MCF 10A (cell line): ENCODE measurements at regions of chr3 and their contacts with region 1.

Region 1: DNA sequence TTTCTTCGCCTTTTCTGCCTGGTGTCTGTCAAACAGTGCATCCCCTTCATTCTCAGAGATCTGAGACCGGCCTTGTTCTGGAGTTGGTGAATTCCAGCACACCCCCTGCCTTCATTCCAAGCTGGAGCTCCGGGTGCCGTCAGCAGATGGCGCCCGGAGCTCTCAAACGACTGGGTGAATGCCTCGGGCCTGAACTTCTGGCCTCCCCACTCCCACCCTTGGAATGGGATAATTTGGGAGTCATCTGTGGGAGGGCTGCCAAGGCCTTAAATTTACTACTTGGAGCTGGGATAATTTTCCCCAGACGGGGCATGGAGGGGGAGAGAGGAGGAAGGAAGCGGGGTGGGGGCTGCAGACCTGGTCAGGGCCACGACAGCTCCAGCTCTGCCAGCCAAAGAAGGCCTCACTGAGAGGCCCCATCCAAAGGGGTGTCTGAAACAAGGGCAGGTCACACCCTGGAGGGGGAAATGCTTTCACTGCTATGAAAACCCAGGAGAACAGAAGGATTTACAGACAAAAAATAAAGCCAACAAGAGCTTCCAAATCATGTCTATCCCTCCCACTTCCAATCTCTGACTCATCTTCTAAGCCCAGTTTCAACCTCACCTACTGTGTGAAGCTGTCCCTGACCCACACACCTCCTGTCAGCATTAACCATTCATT is 187.9 kb downstream of the OPA1 start:
- DNase-seq: peak; percentile 93
- H3K4me3 Mint-ChIP-seq: no peak overlapping the region
- H3K27ac Mint-ChIP-seq: peak overlapping the region; percentile 88
- H3K4me1 Mint-ChIP-seq: peaks cover 35% of the 10 kb centered on the region
- H3K27me3 Mint-ChIP-seq: peaks cover 10% of the 10 kb centered on the region
- CTCF ChIP-seq: peak; percentile 93

Region 2: DNA sequence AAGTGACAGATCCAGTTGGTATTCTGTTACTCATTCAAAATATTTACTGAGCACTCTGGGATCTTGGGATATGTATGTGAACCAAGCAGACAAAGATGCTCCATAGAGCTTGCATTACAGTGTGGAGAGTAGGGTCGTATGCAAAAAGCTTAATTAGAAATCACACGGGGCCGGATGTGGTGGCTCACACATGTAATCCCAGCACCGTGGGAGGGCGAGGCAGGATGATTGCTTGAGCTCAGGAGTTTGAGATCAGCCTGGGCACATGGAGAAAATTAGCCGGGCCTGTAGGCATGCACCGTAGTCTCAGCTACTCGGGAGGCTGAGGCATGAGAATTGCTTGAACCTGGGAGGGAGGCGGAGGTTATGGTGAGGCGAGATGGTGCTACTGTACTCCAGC is 794.6 kb before region 1 on chr3:
- CTCF ChIA-PET with region 1: no interaction called
- POLR2A ChIA-PET with region 1: no interaction called
- intact Hi-C with region 1: no loop called
- DNase-seq: no peak
- H3K4me3 Mint-ChIP-seq: no peak overlapping the region
- H3K27ac Mint-ChIP-seq: no peak overlapping the region
- H3K4me1 Mint-ChIP-seq: no peaks in the 10 kb centered on the region
- H3K27me3 Mint-ChIP-seq: no peaks in the 10 kb centered on the region
- CTCF ChIP-seq: no peak

Region 3: DNA sequence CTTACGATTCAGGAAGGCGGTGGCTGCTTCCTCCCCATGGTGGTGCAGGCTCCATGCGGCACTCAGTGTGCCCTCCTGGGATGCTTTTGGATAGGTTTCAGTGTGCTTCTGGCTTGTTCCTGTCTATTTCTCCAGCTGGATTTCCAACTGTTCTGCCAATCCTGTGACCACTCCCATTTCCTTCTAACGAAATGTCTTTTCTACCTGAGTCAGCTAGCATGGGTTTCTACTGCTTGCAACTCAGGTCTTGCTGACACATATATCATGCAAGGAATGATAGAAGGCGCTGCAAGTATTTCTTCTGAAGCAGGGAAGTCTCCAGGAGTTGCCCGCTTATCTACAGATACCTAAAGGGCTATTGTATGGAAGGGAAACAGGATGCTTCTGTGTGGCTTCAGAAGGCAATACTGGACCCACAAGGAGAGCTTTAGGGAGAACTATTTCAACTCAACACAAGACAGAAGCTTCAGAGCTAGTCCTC is 56.4 kb after region 1 on chr3:
- CTCF ChIA-PET with region 1: interaction called, 8 read pairs
- POLR2A ChIA-PET with region 1: interaction called, 31 read pairs
- intact Hi-C with region 1: no loop called
- DNase-seq: peak; percentile 92
- H3K4me3 Mint-ChIP-seq: peak overlapping the region; percentile 61
- H3K27ac Mint-ChIP-seq: no peak overlapping the region
- H3K4me1 Mint-ChIP-seq: peaks cover 34% of the 10 kb centered on the region
- H3K27me3 Mint-ChIP-seq: no peaks in the 10 kb centered on the region
- CTCF ChIP-seq: no peak

Region 4: DNA sequence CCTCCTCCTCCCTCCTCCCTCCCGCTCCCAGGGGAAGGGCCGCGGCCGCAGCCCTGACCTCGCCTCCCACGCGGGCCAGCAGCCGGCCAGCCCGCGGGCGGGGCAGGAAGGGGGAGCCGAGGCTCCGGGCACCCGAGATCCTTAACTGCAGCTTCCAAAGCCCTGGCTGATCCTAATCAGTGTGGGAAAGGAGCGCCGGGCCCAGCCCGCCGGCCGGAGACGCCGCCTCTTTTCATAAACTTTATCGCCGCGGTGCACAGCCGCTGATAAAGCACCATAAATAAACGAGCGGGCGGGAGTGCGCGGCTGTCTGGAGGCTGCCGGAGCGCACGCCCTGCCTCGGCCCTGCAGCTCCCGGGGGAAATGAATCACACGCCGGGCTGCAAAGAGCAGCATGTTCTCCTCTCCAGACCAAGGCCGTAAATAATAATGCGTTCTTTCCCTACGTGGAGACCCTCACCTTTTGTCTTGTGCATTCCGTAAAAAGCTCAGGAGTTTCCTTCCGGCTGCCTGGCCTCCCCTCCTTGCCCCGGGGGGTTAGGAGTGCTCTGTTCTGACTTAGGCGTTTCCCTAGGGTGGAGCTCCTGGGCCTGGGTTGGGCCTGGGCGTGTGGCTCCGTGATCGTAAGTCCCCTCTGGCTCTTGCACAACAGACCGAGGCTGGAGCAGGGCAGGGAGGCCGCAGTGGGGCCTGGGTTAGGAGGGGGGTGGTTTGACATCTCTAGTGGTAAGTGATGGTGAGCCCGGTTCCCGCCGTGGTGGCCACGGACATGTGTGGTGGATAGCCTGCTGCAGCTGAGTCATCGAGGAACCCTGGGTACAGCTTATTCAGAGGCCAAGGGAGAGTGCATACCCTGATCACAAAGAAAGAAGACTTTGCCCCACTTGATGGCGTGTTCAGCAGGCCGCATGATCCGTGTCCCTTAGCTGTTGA is 222.4 kb after region 1 on chr3:
- CTCF ChIA-PET with region 1: interaction called, 10 read pairs
- POLR2A ChIA-PET with region 1: interaction called, 19 read pairs
- intact Hi-C with region 1: loop called (anchors 1 kb)
- DNase-seq: peak; percentile 96
- H3K4me3 Mint-ChIP-seq: peak overlapping the region; percentile 67
- H3K27ac Mint-ChIP-seq: peak overlapping the region; percentile 69
- H3K4me1 Mint-ChIP-seq: peaks cover 22% of the 10 kb centered on the region
- H3K27me3 Mint-ChIP-seq: no peaks in the 10 kb centered on the region
- CTCF ChIP-seq: no peak

Region 5: DNA sequence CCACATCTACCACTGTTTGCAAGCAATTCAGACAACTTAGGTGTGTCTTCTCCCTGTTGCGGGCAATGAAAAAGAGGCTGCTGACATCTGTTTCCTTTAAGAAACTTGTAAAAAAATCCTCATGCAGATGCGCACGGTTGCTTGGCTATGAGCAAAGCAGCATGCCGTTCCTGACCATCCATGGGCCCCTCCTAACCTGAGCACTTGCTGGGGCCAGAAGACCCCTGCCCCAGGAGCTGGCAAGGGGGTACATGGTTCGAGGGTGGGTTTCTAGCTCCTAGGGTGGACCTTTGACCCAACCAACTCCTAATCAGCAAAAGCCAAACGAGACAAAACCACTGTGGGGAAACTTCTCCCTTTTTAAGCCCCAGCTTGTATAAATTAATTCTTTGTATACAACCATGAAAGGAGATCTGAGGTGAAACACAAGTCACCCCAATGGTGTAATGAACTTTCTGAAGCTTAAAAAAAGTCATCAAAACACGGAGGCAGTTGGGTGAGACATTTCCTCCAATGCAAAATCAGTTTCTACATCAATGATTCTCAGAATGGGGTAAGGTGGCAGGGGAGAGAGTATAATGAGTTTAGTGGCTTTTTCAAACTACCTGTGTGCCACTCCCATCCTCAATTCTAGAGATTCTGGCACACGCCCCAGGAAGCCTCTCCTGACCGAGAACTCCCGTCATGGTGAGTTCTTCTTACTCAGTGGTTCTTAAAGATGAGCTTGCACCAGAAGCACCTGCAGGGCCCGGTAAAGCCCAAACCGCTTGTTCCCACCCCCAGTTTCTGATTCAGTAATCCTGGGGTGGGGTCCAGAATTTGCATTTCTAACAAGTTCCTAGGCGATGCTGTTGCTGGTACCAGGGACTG is 526.1 kb after region 1 on chr3:
- CTCF ChIA-PET with region 1: interaction called, 20 read pairs
- POLR2A ChIA-PET with region 1: interaction called, 4 read pairs
- intact Hi-C with region 1: no loop called
- DNase-seq: no peak
- H3K4me3 Mint-ChIP-seq: no peak overlapping the region
- H3K27ac Mint-ChIP-seq: no peak overlapping the region
- H3K4me1 Mint-ChIP-seq: peaks cover 9% of the 10 kb centered on the region
- H3K27me3 Mint-ChIP-seq: no peaks in the 10 kb centered on the region
- CTCF ChIP-seq: no peak

Region 6: GRCh38 chr3:194333212-194333980 is 552.5 kb after region 1 on chr3:
- CTCF ChIA-PET with region 1: interaction called, 9 read pairs
- POLR2A ChIA-PET with region 1: interaction called, 12 read pairs
- intact Hi-C with region 1: no loop called
- DNase-seq: peak; percentile 97
- H3K4me3 Mint-ChIP-seq: peak overlapping the region; percentile 77
- H3K27ac Mint-ChIP-seq: peak overlapping the region; percentile 90
- H3K4me1 Mint-ChIP-seq: peaks cover 28% of the 10 kb centered on the region
- H3K27me3 Mint-ChIP-seq: no peaks in the 10 kb centered on the region
- CTCF ChIP-seq: peak; percentile 97